ENCODE measurements at regions of chr5 and their contacts with region 1.

Region 1: GRCh38 chr5:39376293-39376714 is 12.0 kb upstream of the C9 start:
- DNase-seq: peak in 2 of 5 donors; percentile 25 to 54
- H3K4me3 ChIP-seq: no peak overlapping the region
- H3K27ac ChIP-seq: no peak overlapping the region
- H3K4me1 ChIP-seq: peaks cover 4% of the 10 kb centered on the region
- H3K27me3 ChIP-seq: no peaks in the 10 kb centered on the region
- CTCF ChIP-seq: peak; percentile 42 to 58 (median 53)
- EP300 ChIP-seq: no peak
- POLR2A ChIP-seq: no peak

Region 2: DNA sequence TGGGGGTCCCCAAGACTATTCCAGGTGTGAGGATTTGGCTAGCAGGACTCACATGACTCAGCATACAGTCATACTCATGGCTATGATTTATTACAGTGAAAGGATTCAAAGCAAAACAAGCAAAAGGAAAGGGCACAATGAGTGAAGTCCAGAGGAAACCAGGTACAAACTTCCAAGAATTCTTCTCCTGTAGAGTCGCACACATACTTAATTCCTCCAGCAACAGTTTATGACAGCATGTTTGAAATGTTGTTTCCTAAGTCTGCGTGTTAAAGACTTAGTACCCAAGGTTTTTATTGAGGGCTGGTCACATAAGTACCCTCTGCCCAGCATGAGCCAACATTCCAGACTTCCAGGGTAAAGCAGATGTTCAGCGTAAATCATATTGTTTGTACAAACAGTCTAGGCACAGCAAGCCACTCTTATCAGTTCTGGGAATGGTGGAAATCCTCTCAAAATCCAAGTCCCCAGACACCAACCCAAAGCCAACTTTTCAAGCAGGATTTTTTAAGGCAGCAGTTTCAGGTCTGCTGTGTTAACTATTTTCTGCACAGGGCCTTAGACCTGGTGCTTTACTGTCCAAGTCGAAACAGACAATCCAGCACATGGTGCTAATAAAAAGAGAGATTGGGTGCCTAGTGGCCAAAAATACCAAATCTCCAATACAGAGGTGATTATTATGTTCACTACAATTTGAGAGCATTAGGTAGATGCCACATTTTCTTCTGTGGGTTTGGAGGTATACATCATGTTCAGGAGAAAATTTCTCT is 283.5 kb before region 1 on chr5:
- intact Hi-C with region 1: no loop called
- DNase-seq: no peak
- H3K4me3 ChIP-seq: no peak overlapping the region
- H3K27ac ChIP-seq: no peak overlapping the region
- H3K4me1 ChIP-seq: no peaks in the 10 kb centered on the region
- H3K27me3 ChIP-seq: no peaks in the 10 kb centered on the region
- CTCF ChIP-seq: no peak
- EP300 ChIP-seq: no peak
- POLR2A ChIP-seq: no peak

Region 3: GRCh38 chr5:39547553-39548154 is 171.3 kb after region 1 on chr5:
- intact Hi-C with region 1: loop called (anchors 5 kb)
- DNase-seq: peak in 2 of 5 donors; percentile 16 to 62
- H3K4me3 ChIP-seq: no peak overlapping the region
- H3K27ac ChIP-seq: no peak overlapping the region
- H3K4me1 ChIP-seq: peaks cover 3% of the 10 kb centered on the region
- H3K27me3 ChIP-seq: no peaks in the 10 kb centered on the region
- CTCF ChIP-seq: peak; percentile 63 to 75 (median 72)
- EP300 ChIP-seq: no peak
- POLR2A ChIP-seq: no peak

Region 4: GRCh38 chr5:39928709-39929108 is 552.4 kb after region 1 on chr5:
- intact Hi-C with region 1: no loop called
- DNase-seq: no peak
- H3K4me3 ChIP-seq: no peak overlapping the region
- H3K27ac ChIP-seq: no peak overlapping the region
- H3K4me1 ChIP-seq: no peaks in the 10 kb centered on the region
- H3K27me3 ChIP-seq: no peaks in the 10 kb centered on the region
- CTCF ChIP-seq: no peak
- EP300 ChIP-seq: no peak
- POLR2A ChIP-seq: no peak

Measured in ovary (tissue), 10 donors.